Naive thymus-derived CD4-positive, alpha-beta T cell (primary cell): ENCODE measurements at regions of chr22 and their contacts with region 1.

Region 1: GRCh38 chr22:24325105-24325757 is 54.6 kb downstream of the SPECC1L start:
- DNase-seq: peak in 7 of 9 donors; percentile 27 to 62 (median 51)
- ATAC-seq: peak; percentile 90
- H3K4me3 ChIP-seq: no peak overlapping the region
- H3K4me3 Mint-ChIP-seq: peak overlapping the region in 4 of 10 donors; percentile 1 to 66 (median 36)
- H3K27ac ChIP-seq: no peak overlapping the region
- H3K27ac Mint-ChIP-seq: peak overlapping the region in 6 of 9 donors; percentile 2 to 51 (median 41)
- H3K4me1 ChIP-seq: peaks cover 0 to 13% of the 10 kb centered on the region in 2 donors
- H3K4me1 Mint-ChIP-seq: peaks cover 14 to 46% (median 40%) of the 10 kb centered on the region in 7 donors
- H3K27me3 ChIP-seq: no peaks in the 10 kb centered on the region
- H3K27me3 Mint-ChIP-seq: no peaks in the 10 kb centered on the region

Region 2: DNA sequence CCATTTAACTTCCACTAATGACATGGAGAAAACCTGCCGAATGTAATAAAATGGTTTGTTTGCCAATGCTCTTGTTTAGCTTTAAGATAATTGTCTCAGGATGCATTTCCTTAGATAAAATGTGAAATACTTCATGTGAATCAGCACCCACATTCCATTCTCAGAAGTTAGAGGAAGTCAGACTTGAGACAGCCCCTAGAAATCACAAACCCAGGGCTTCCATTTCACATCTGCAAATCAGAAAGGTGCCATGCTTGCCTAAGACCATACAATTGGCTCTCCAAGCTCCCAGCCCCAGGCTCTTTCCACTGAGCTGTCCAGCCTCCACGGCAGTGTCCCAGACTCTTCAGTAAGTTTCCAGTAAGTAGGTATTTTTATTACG is 66.6 kb after region 1 on chr22:
- CTCF ChIA-PET with region 1: no interaction called
- POLR2A ChIA-PET with region 1: no interaction called
- intact Hi-C with region 1: loop called (anchors 5 to 10 kb)
- DNase-seq: no peak
- ATAC-seq: no peak
- H3K4me3 ChIP-seq: no peak overlapping the region
- H3K4me3 Mint-ChIP-seq: peak overlapping the region in 2 of 10 donors; percentile 3 to 57
- H3K27ac ChIP-seq: no peak overlapping the region
- H3K27ac Mint-ChIP-seq: peak overlapping the region in 2 of 9 donors; percentile 41 to 59
- H3K4me1 ChIP-seq: no peaks in the 10 kb centered on the region
- H3K4me1 Mint-ChIP-seq: peaks cover 17 to 34% (median 27%) of the 10 kb centered on the region in 7 donors
- H3K27me3 ChIP-seq: no peaks in the 10 kb centered on the region
- H3K27me3 Mint-ChIP-seq: no peaks in the 10 kb centered on the region

Region 3: GRCh38 chr22:24398409-24398808 is 73.2 kb after region 1 on chr22:
- CTCF ChIA-PET with region 1: no interaction called
- POLR2A ChIA-PET with region 1: no interaction called
- intact Hi-C with region 1: loop called (anchors 5 to 10 kb)
- DNase-seq: no peak
- ATAC-seq: no peak
- H3K4me3 ChIP-seq: no peak overlapping the region
- H3K4me3 Mint-ChIP-seq: peak overlapping the region in 1 of 10 donors; percentile 13
- H3K27ac ChIP-seq: no peak overlapping the region
- H3K27ac Mint-ChIP-seq: peak overlapping the region in 5 of 9 donors; percentile 34 to 77 (median 59)
- H3K4me1 ChIP-seq: no peaks in the 10 kb centered on the region
- H3K4me1 Mint-ChIP-seq: peaks cover 5 to 55% (median 18%) of the 10 kb centered on the region in 7 donors
- H3K27me3 ChIP-seq: no peaks in the 10 kb centered on the region
- H3K27me3 Mint-ChIP-seq: no peaks in the 10 kb centered on the region

Region 4: GRCh38 chr22:24486501-24486921 is 161.3 kb after region 1 on chr22:
- CTCF ChIA-PET with region 1: no interaction called
- POLR2A ChIA-PET with region 1: no interaction called
- intact Hi-C with region 1: loop called in 1 of 2 experiments (anchors 1 kb)
- DNase-seq: no peak
- ATAC-seq: peak; percentile 74
- H3K4me3 ChIP-seq: no peak overlapping the region
- H3K4me3 Mint-ChIP-seq: no peak overlapping the region
- H3K27ac ChIP-seq: no peak overlapping the region
- H3K27ac Mint-ChIP-seq: peak overlapping the region in 1 of 9 donors; percentile 10
- H3K4me1 ChIP-seq: no peaks in the 10 kb centered on the region
- H3K4me1 Mint-ChIP-seq: peaks cover 0 to 20% (median 0%) of the 10 kb centered on the region in 7 donors
- H3K27me3 ChIP-seq: no peaks in the 10 kb centered on the region
- H3K27me3 Mint-ChIP-seq: peaks cover 0 to 12% (median 0%) of the 10 kb centered on the region in 5 donors

Region 5: GRCh38 chr22:24503137-24503842 is 178.1 kb after region 1 on chr22:
- CTCF ChIA-PET with region 1: no interaction called
- POLR2A ChIA-PET with region 1: no interaction called
- intact Hi-C with region 1: loop called in 1 of 2 experiments (anchors 1 kb)
- DNase-seq: peak; percentile 14 to 58 (median 40)
- ATAC-seq: peak; percentile 88
- H3K4me3 ChIP-seq: no peak overlapping the region
- H3K4me3 Mint-ChIP-seq: no peak overlapping the region
- H3K27ac ChIP-seq: no peak overlapping the region
- H3K27ac Mint-ChIP-seq: peak overlapping the region in 2 of 9 donors; percentile 21 to 78
- H3K4me1 ChIP-seq: peaks cover 0 to 1% of the 10 kb centered on the region in 2 donors
- H3K4me1 Mint-ChIP-seq: peaks cover 4 to 26% (median 8%) of the 10 kb centered on the region in 7 donors
- H3K27me3 ChIP-seq: no peaks in the 10 kb centered on the region
- H3K27me3 Mint-ChIP-seq: peaks cover 0 to 7% (median 0%) of the 10 kb centered on the region in 5 donors

Region 6: DNA sequence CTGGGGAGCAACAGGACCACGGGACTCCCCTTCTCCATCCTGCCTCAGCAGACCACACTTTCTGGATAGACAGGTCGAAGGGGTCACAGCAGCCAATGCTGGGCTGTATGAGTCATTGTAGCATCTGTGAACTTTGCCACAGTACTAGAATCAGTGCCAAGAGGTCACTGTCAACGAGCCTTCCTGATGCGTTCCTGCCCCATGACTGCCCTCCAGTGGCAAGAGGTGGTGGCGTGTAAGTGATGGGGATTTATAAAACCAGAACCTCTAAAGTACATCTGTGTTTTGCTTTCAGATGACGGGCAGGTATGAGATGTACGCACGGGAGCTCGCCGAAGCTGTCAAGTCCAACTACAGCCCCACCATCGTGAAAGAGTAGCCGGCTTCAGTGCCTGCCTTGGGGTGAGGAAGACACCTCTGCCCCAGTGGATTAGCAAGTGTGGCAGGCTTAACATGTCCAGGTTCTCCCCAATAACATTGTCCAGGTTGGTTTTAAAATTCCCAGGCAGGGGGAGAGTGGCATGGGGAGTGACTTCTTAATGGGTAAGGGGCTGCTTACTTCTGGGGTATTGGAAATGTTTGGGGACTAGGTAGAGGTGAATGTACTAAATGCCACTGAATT is 200.3 kb after region 1 on chr22:
- CTCF ChIA-PET with region 1: interaction called, 3 read pairs
- POLR2A ChIA-PET with region 1: interaction called, 3 read pairs
- intact Hi-C with region 1: loop called (anchors 1 kb)
- DNase-seq: peak; percentile 54 to 77 (median 71)
- ATAC-seq: peak; percentile 98
- H3K4me3 ChIP-seq: no peak overlapping the region
- H3K4me3 Mint-ChIP-seq: no peak overlapping the region
- H3K27ac ChIP-seq: no peak overlapping the region
- H3K27ac Mint-ChIP-seq: no peak overlapping the region
- H3K4me1 ChIP-seq: no peaks in the 10 kb centered on the region
- H3K4me1 Mint-ChIP-seq: peaks cover 0 to 12% (median 9%) of the 10 kb centered on the region in 7 donors
- H3K27me3 ChIP-seq: no peaks in the 10 kb centered on the region
- H3K27me3 Mint-ChIP-seq: peaks cover 0 to 7% (median 0%) of the 10 kb centered on the region in 5 donors

Region 7: GRCh38 chr22:25419237-25420113 is 1094.2 kb after region 1 on chr22:
- CTCF ChIA-PET with region 1: no interaction called
- POLR2A ChIA-PET with region 1: no interaction called
- intact Hi-C with region 1: no loop called
- DNase-seq: peak in 1 of 9 donors; percentile 17
- ATAC-seq: peak; percentile 70
- H3K4me3 ChIP-seq: peak overlapping the region; percentile 34
- H3K4me3 Mint-ChIP-seq: peak overlapping the region; percentile 31 to 81 (median 74)
- H3K27ac ChIP-seq: no peak overlapping the region
- H3K27ac Mint-ChIP-seq: no peak overlapping the region
- H3K4me1 ChIP-seq: peaks cover 0 to 22% of the 10 kb centered on the region in 2 donors
- H3K4me1 Mint-ChIP-seq: peaks cover 16 to 37% (median 28%) of the 10 kb centered on the region in 7 donors
- H3K27me3 ChIP-seq: peaks cover 4 to 13% of the 10 kb centered on the region in 2 donors
- H3K27me3 Mint-ChIP-seq: peaks cover 44 to 81% (median 51%) of the 10 kb centered on the region in 5 donors